ENCODE measurements at regions of chr4 and their contacts with region 1.

Region 1: GRCh38 chr4:61128682-61129081 is 71.4 kb upstream of the ADGRL3 start:
- DNase-seq: no peak
- ATAC-seq: no peak
- H3K4me3 ChIP-seq: no peak overlapping the region
- H3K27ac ChIP-seq: no peak overlapping the region
- H3K4me1 ChIP-seq: no peaks in the 10 kb centered on the region
- H3K27me3 ChIP-seq: no peaks in the 10 kb centered on the region
- CTCF ChIP-seq: no peak
- EP300 ChIP-seq: no peak
- POLR2A ChIP-seq: no peak
- RAD21 ChIP-seq: no peak

Region 2: DNA sequence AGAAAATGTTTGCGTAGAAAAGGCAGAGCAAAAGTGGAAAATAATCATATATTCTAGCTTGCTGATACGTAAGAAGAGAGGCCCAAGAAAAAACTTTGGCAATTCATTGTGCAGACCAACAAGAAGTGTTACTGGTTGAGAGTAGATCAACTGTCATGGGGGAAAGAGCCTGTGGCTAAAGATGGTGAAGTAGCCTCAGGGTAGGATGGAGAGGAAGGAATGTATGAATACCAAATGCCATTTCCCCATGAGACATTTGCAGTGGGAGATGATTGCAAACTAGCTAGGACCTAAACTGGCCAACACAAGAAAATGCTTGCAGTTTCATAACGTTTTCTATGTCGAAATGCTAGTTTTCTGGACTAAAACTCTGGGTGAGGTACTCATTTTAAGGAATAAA is 23.8 kb after region 1 on chr4:
- CTCF ChIA-PET with region 1: no interaction called
- POLR2A ChIA-PET with region 1: no interaction called
- in situ Hi-C with region 1: no loop called
- intact Hi-C with region 1: loop called (anchors 1 kb)
- DNase-seq: no peak
- ATAC-seq: no peak
- H3K4me3 ChIP-seq: no peak overlapping the region
- H3K27ac ChIP-seq: no peak overlapping the region
- H3K4me1 ChIP-seq: no peaks in the 10 kb centered on the region
- H3K27me3 ChIP-seq: no peaks in the 10 kb centered on the region
- CTCF ChIP-seq: no peak
- EP300 ChIP-seq: no peak
- POLR2A ChIP-seq: no peak
- RAD21 ChIP-seq: no peak